ENCODE measurements at regions of chr1 and their contacts with region 1.

Region 1: DNA sequence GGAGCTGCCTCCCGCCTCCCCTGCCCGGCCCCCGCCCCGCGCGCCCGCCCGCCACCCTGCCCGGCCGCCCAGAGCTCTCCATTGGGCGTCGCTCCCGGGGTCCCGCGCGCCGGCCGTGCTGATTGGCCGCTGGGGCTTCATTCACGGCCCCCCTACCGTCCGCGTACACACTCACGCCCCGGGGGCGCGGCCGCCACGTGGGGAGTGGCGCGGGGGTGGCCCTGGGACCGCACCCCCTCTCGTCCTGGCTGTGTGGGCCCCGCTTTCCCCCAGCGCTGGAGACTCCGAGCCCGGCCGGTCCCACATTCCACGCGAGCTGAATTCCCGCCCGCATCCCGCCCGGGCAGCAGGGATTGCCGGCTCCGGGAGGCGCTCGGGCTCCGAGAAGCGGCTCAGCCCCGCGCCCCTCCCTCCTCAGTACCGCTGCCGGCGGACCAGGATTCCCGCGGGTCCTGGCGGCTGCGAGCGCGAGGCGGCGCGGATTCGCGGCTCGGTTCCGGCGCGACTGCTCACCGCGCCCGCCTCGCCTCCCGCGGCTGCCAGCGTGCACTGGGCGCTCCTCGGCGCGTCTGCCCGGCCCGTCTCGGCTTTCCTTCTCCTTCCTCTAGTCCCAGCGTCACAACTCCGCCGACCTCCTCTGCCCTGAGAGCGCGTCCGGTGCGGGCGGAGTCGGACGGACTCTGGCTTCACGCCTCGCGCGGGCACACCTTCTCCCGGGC is 450 bp upstream of the POU3F1 start:
- DNase-seq: peak; percentile 76 to 90 (median 87)
- ATAC-seq: peak; percentile 90 to 92 (median 91)
- H3K4me3 ChIP-seq: peak overlapping the region; percentile 32 to 54 (median 49)
- H3K27ac ChIP-seq: no peak overlapping the region
- H3K4me1 ChIP-seq: peaks cover 0 to 7% (median 3%) of the 10 kb centered on the region in 4 donors
- H3K27me3 ChIP-seq: peaks cover 10 to 17% of the 10 kb centered on the region in 2 donors
- CTCF ChIP-seq: no peak
- POLR2A ChIP-seq: no peak

Region 2: DNA sequence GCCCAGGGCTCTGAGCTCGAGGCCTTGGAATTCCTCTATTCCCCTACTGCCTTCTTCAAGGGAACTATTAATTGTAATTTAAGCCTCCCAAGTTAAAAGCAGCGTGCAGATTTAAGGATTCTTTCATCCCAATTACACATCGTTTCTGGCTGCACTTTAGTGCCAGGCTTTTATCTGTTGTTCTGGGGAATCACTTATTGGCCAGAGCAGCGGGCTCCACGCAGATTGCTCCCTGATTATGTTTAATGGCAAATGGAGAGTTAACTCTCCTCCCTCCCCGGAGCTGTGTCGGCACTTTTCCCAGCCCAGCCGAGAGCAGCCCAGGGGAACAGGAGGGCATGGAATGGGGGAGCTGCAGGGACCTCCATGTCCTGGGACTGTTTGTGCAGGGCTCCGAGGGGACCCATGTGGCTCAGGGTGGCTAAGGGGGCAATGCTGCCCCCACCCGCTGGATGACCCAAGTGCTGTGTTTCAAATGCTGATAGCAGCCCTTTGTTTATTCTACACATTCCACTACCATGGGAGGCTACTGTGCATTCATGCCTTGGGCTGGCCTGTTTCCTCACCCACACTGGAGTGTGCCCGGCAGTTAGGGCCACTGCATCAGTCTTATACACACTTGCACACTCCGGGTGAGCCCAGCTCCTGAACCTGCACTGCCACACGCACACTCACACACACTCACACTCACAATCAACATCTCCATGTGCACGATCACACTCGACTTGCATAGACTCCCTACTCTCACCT is 92.9 kb after region 1 on chr1:
- intact Hi-C with region 1: loop called in 1 of 2 experiments (anchors 10 kb)
- DNase-seq: no peak
- ATAC-seq: no peak
- H3K4me3 ChIP-seq: no peak overlapping the region
- H3K27ac ChIP-seq: no peak overlapping the region
- H3K4me1 ChIP-seq: no peaks in the 10 kb centered on the region
- H3K27me3 ChIP-seq: no peaks in the 10 kb centered on the region
- CTCF ChIP-seq: no peak
- POLR2A ChIP-seq: no peak